GM18951 (cell line): ENCODE measurements at regions of chr1 and their contacts with region 1.

Region 1: GRCh38 chr1:236103646-236104218 is 38.6 kb upstream of the GPR137B start:
- POLR2A ChIP-seq: no peak

Region 2: DNA sequence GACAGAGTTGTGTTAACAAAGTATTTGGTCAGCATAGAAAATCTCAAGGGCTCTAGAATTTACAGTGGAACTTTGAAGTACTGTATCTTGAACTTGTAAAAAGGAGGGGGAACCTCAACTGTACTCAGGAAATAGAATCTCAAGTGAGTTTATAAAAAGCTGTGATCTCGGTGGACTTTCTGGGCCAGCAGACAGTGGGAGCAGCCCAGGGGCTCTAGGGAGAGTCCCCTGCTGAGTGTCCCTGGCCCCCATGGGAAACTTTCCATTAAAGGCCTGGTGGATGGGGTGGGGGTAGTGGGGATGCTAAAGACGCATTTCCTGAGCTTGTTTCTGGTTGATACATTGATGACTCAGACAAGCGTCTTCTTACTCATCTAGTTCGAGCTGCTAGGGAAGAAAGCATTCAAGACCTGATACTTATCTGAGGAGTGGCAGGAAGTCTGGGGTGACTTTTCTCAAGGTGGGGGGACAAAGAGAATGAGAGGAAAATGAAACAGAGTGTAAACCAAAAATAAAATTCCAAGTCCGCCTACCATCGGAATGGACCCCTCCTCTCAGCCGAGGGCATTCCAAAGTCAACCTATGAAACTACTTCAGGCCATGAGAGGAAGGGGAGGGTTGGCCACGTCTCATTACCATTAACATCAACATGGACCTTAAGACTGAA is 104.3 kb before region 1 on chr1:
- in situ Hi-C with region 1: no loop called
- POLR2A ChIP-seq: no peak

Region 3: GRCh38 chr1:236064674-236065508 is 38.8 kb before region 1 on chr1 and contains the start of gene NID1:
- in situ Hi-C with region 1: no loop called
- POLR2A ChIP-seq: peak; percentile 43

Region 4: DNA sequence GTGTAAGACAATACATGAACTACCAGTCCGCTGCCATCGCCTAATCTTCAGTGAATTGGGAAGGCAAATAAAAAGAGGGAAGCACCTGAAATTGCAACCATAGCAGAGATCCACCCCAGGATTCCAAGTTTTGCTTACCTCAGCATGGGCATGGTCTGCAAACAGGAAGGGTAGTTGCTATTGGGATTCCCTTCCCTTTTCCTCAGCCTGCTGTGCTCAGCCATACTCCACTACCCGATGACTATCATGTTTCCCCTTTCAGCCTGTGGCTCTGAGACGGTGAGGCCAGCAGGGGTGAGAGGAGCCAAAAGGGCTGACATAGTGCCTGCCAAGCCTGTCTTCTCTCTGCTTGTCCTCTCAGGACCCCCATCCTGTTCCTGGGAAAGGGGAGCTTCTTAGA is 102.8 kb after region 1 on chr1:
- in situ Hi-C with region 1: no loop called
- POLR2A ChIP-seq: no peak

Region 5: GRCh38 chr1:236489710-236490377 is 386.1 kb after region 1 on chr1:
- in situ Hi-C with region 1: loop called (anchors 25 kb)
- POLR2A ChIP-seq: no peak

Region 6: DNA sequence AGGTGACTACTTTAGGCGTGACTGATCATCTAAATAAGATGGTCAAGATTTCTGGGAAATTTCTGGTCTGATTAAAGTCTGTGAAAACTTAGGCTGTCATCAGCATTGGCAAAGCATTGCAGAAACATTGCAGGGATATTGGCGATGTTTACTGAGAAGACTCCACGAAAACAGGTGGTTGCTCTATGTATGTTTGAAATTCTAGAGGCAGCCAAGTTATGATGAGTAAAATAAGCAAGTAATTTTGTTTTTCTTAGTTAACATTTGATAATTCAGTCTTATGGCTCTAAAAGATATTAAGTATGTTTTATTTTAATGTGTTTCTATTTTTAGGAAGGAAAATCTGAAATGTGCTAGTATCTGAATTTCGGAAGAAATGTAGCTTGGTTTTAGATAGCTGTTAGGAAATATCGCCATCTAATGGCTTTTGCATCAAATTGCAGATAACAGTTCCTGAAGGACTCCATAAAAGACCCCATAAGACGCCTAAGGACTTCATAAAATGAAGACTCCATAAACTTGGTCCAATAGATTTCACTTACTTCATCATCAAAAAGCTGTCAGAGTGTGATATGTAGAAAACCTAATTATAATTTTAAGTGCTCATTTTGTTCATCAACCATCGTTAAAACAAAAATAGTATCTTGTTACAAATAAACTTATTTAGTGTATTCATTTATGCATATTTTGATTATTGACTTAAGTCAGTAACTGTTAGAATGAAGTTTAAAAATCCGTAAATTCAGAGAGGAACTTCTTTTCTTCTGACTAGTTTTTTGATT is 1282.8 kb after region 1 on chr1:
- in situ Hi-C with region 1: loop called (anchors 25 kb)
- POLR2A ChIP-seq: no peak